B cell (primary cell): ENCODE measurements at regions of chr3 and their contacts with region 1.

Region 1: GRCh38 chr3:122415720-122416654 is at the start of gene WDR5B:
- DNase-seq: peak; percentile 100
- ATAC-seq: peak; percentile 88
- H3K4me3 ChIP-seq: peak within 1 kb of the TSS; percentile 74 to 98 (median 83)
- H3K4me3 Mint-ChIP-seq: peak within 1 kb of the TSS; percentile 100
- H3K27ac ChIP-seq: peak within 1 kb of the TSS; percentile 87 to 97
- H3K27ac Mint-ChIP-seq: peak within 1 kb of the TSS; percentile 100
- H3K4me1 ChIP-seq: peaks cover 20 to 26% of the 10 kb centered on the region in 2 donors
- H3K4me1 Mint-ChIP-seq: peaks cover 55% of the 10 kb centered on the region
- H3K27me3 ChIP-seq: no peaks in the 10 kb centered on the region
- H3K27me3 Mint-ChIP-seq: no peaks in the 10 kb centered on the region
- CTCF ChIP-seq: no peak
- total RNA-seq, gene WDR5B: 11.6 and 12.3 TPM in 2 replicates

Region 2: DNA sequence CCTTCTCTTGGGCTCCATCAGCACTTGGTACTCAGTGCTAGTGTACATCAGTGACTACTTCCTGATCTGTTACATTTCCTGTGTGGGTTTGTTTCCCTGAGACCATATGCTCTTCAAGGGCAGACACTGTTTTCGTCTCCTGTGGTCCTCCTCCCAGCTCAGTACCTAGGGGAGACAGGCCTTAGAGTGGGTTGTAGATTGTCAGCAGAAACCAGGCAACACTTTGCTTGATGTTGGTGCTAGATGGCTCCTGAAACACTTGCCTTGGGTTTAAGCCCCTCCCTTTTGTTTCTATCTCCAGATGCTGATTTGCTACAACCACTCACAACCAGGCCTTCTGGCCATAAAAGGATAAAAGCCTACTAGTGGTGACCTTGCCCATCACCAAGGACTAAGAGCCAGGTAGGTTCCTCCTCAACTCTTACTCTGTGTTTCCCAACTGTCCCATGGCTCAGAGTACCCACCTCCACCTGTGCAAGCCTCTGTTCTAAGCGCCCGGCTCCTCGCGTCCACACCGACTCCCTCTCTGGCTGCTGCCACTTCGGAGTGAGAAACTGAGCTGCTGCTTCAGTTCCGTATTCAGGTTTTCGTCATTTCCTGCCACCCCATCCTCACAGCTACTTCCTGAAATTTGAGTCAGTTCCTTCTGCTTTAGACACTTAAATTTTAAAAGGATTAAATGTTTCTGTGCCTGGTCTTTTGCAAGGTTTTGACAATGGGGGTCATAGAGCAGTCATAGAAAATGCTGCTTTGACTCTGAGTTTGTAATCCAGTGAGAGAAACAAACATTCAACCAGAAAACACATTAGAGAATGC is 755.4 kb before region 1 on chr3 and contains the start of gene HCLS1:
- CTCF ChIA-PET with region 1: no interaction called
- POLR2A ChIA-PET with region 1: no interaction called
- intact Hi-C with region 1: loop called (anchors 1 kb)
- DNase-seq: peak; percentile 91
- ATAC-seq: peak; percentile 84
- H3K4me3 ChIP-seq: peak within 1 kb of the TSS; percentile 59 to 92 (median 68)
- H3K4me3 Mint-ChIP-seq: peak within 1 kb of the TSS; percentile 97
- H3K27ac ChIP-seq: peak within 1 kb of the TSS; percentile 90 to 94
- H3K27ac Mint-ChIP-seq: peak within 1 kb of the TSS; percentile 98
- H3K4me1 ChIP-seq: peaks cover 34 to 39% of the 10 kb centered on the region in 2 donors
- H3K4me1 Mint-ChIP-seq: peaks cover 54% of the 10 kb centered on the region
- H3K27me3 ChIP-seq: no peaks in the 10 kb centered on the region
- H3K27me3 Mint-ChIP-seq: no peaks in the 10 kb centered on the region
- CTCF ChIP-seq: no peak
- total RNA-seq, gene HCLS1: 317 and 331 TPM in 2 replicates

Region 3: GRCh38 chr3:121834696-121835464 is 581.1 kb before region 1 on chr3 and contains the starts of genes EAF2 and IQCB1:
- CTCF ChIA-PET with region 1: no interaction called
- POLR2A ChIA-PET with region 1: no interaction called
- intact Hi-C with region 1: loop called (anchors 1 kb)
- DNase-seq: peak; percentile 99
- ATAC-seq: peak; percentile 97
- H3K4me3 ChIP-seq: peak within 1 kb of the TSS; percentile 83 to 97 (median 94)
- H3K4me3 Mint-ChIP-seq: peak within 1 kb of the TSS; percentile 89
- H3K27ac ChIP-seq: peak within 1 kb of the TSS; percentile 88 to 94
- H3K27ac Mint-ChIP-seq: peak within 1 kb of the TSS; percentile 88
- H3K4me1 ChIP-seq: peaks cover 22 to 46% of the 10 kb centered on the region in 2 donors
- H3K4me1 Mint-ChIP-seq: peaks cover 64% of the 10 kb centered on the region
- H3K27me3 ChIP-seq: no peaks in the 10 kb centered on the region
- H3K27me3 Mint-ChIP-seq: no peaks in the 10 kb centered on the region
- CTCF ChIP-seq: no peak
- total RNA-seq, gene EAF2: 31.1 and 35.0 TPM in 2 replicates
- total RNA-seq, gene IQCB1: 54.6 and 56.5 TPM in 2 replicates

Region 4: GRCh38 chr3:122283796-122284445 is 132.1 kb before region 1 on chr3:
- CTCF ChIA-PET with region 1: no interaction called
- POLR2A ChIA-PET with region 1: no interaction called
- intact Hi-C with region 1: no loop called
- DNase-seq: no peak
- ATAC-seq: no peak
- H3K4me3 ChIP-seq: no peak overlapping the region
- H3K4me3 Mint-ChIP-seq: no peak overlapping the region
- H3K27ac ChIP-seq: no peak overlapping the region
- H3K27ac Mint-ChIP-seq: no peak overlapping the region
- H3K4me1 ChIP-seq: no peaks in the 10 kb centered on the region
- H3K4me1 Mint-ChIP-seq: no peaks in the 10 kb centered on the region
- H3K27me3 ChIP-seq: no peaks in the 10 kb centered on the region
- H3K27me3 Mint-ChIP-seq: peaks cover 7% of the 10 kb centered on the region
- CTCF ChIP-seq: no peak

Region 5: GRCh38 chr3:122514123-122515019 is 98.4 kb after region 1 on chr3 and contains the start of gene KPNA1:
- CTCF ChIA-PET with region 1: interaction called, 3 read pairs
- POLR2A ChIA-PET with region 1: interaction called, 7 read pairs
- intact Hi-C with region 1: loop called (anchors 1 kb)
- DNase-seq: peak; percentile 94
- ATAC-seq: peak; percentile 79
- H3K4me3 ChIP-seq: peak within 1 kb of the TSS; percentile 64 to 90 (median 85)
- H3K4me3 Mint-ChIP-seq: peak within 1 kb of the TSS; percentile 81
- H3K27ac ChIP-seq: peak within 1 kb of the TSS; percentile 92 to 99
- H3K27ac Mint-ChIP-seq: peak within 1 kb of the TSS; percentile 96
- H3K4me1 ChIP-seq: peaks cover 11 to 15% of the 10 kb centered on the region in 2 donors
- H3K4me1 Mint-ChIP-seq: peaks cover 34% of the 10 kb centered on the region
- H3K27me3 ChIP-seq: no peaks in the 10 kb centered on the region
- H3K27me3 Mint-ChIP-seq: no peaks in the 10 kb centered on the region
- CTCF ChIP-seq: no peak
- total RNA-seq, gene KPNA1: 79.4 and 85.9 TPM in 2 replicates

Region 6: DNA sequence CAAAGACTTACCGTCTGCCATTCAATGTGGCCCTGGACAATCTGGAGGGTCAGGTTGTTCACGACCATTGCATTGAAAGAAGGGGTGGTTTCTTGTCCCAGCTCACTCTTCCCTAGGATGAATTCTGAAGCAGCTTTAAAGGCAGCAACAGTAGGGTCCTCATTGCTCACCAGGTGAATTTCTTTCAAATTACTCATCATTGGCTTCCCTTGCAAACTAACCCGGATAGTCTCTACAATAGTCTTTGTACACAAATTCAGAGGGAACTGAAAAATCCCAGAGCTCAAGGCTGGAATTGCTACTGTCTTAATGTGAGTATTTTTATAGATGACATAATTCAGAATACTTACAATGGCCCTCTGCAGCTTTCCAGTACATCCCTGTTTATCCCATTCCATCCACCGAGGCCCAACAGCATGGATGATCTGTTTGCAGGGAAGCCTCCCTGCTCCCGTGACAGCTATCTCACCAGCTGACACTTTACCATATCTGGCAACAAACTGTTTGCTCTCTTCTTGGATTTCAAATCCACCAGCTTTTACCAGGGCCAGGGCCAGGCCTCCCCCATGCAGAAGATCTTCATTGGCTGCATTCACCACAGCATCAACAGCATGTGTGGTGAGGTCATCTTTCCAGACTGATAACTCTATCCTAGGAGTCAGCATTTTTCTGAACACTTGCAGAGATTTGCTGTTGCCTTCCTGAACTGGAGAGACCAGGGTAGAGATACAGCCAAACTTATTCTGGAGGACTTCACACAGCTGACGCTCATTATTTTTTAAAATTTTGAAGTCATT is 139.5 kb after region 1 on chr3:
- CTCF ChIA-PET with region 1: no interaction called
- POLR2A ChIA-PET with region 1: no interaction called
- intact Hi-C with region 1: no loop called
- DNase-seq: no peak
- ATAC-seq: no peak
- H3K4me3 ChIP-seq: no peak overlapping the region
- H3K4me3 Mint-ChIP-seq: no peak overlapping the region
- H3K27ac ChIP-seq: no peak overlapping the region
- H3K27ac Mint-ChIP-seq: no peak overlapping the region
- H3K4me1 ChIP-seq: no peaks in the 10 kb centered on the region
- H3K4me1 Mint-ChIP-seq: peaks cover 11% of the 10 kb centered on the region
- H3K27me3 ChIP-seq: no peaks in the 10 kb centered on the region
- H3K27me3 Mint-ChIP-seq: no peaks in the 10 kb centered on the region
- CTCF ChIP-seq: no peak

Region 7: DNA sequence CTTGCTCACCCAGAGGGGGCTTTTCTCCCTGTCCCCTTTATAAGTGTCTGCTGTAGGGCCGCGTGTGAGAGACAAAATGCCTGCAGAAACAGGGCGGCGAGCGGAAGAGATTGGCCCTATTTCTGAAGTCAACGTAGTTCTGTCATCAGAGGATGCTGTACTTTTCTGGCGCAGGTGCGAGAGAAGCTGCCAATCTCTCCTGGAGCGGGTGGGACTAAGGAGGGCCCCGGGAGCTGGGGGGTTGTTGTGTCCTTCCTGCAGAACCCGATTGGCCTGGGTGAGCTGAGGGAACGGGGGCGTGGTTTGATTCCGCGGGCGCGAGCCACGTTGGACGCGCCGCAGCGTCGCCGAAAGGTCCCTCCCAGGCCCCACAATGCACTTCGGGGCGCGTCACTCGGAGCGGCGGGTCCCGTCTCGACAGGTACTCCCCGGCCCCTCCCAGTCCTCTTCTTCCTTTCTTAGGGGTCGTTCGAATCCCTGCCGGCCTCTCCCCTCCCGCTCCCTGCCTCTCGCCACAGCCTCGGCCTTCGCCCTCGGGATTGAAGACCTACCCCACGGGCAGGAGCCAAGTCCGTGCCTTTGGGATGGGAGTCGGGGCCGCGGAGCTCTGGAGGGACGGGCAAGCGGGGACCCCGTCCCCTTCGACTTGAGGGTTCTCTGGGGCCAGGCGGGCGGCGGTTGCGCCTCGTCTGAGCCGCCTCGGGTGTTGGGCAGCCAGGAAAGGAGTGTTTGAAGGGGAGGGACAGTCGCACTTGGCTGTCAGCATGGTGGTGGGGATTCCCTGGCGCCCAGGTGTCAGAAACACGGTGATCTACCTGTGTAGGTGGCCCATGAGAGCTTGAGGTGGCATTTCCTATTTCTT is 785.8 kb after region 1 on chr3 and contains the start of gene SEC22A:
- CTCF ChIA-PET with region 1: no interaction called
- POLR2A ChIA-PET with region 1: no interaction called
- intact Hi-C with region 1: loop called (anchors 5 kb)
- DNase-seq: peak; percentile 95
- ATAC-seq: peak; percentile 96
- H3K4me3 ChIP-seq: peak within 1 kb of the TSS; percentile 86 to 99 (median 90)
- H3K4me3 Mint-ChIP-seq: peak within 1 kb of the TSS; percentile 95
- H3K27ac ChIP-seq: peak within 1 kb of the TSS; percentile 92 to 96
- H3K27ac Mint-ChIP-seq: peak within 1 kb of the TSS; percentile 94
- H3K4me1 ChIP-seq: peaks cover 13 to 18% of the 10 kb centered on the region in 2 donors
- H3K4me1 Mint-ChIP-seq: peaks cover 22% of the 10 kb centered on the region
- H3K27me3 ChIP-seq: no peaks in the 10 kb centered on the region
- H3K27me3 Mint-ChIP-seq: no peaks in the 10 kb centered on the region
- CTCF ChIP-seq: no peak
- total RNA-seq, gene SEC22A: 16.1 and 19.3 TPM in 2 replicates